Posterior vena cava (tissue), 2 donors: ENCODE measurements at regions of chr2 and their contacts with region 1.

Region 1: DNA sequence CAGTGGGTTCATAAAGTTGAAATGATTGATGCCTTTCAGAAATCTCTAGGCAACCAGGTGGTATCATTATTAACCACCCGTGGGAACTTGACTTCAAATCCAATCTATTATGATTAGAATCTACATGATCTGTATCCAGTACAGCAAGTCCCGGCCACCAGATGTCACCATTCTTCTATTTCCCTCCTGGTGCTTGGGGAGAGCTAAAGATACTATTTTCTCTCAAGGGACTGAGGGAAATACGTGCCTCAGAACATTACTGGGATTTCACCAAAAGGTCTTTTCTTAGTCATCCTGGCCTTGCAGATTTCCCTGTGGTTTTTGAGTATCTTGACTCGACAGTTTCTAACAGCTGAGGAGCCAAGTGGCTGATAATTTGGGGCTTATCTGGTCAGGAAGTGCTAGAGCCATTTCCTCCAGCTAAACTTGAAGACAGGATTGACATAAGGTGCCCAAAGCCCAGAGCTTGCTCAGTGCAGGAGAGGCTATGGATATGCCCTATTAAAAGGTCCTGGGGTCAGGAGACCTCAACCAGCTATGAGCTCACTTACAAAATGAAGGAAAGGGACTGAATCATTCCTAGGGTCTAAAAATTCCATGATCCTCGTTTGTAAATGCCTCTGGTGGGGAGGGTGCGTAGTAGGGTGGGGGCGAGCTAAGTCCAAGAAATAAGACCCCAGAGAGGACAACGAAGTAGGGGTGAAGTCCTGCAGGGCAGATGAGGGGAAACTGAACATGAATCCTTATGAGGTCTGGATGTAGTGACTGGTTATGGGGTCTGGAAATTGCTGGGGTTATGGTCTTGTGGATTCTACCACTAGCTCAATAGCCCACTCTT is 135.4 kb upstream of the MGAT5 start:
- DNase-seq: peak; percentile 94

Region 2: GRCh38 chr2:134245340-134245984 is 127.0 kb after region 1 on chr2:
- intact Hi-C with region 1: loop called in 1 of 2 experiments (anchors 10 kb)
- DNase-seq: peak; percentile 89

Region 3: DNA sequence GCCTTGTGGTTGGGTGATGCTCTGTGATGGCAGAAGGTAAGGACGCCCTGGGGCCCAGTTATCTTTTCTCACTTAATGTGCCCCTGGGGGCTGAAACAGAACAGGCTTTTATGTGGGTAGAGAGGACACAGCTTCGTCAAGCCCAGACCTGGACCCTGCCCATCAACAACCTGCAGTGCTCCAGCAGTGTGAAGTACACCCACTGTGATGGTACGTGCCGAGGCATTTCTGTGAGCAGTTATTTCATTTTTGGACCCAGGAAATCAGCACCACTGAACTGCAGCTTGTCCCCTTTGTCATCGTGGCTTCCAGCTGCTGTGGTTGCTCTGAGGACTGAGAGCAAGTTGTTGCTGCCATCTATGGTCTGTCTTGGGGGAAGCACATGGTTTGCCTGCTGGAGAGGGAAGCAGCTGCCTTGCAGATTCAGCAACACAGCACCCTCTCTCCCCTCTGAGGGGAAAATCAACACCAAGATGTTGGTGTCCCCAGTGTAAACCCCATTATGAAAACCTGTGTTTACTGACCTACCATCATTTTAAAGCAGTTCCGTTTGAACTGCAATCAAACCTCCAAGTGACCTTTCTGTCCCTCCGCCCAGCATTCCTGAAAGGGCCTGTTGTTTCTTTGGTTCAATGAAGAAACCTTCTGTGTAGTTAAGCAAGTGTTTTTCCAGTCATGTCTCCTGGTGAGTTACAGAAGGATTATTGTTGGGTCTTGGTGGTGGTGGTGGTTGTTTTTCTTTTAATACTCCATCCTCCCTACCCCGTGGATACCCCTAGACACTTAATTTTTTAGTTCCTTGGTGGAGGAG is 293.5 kb after region 1 on chr2:
- intact Hi-C with region 1: loop called (anchors 5 kb)
- DNase-seq: no peak